ENCODE measurements at regions of chr9 and their contacts with region 1.

Region 1: DNA sequence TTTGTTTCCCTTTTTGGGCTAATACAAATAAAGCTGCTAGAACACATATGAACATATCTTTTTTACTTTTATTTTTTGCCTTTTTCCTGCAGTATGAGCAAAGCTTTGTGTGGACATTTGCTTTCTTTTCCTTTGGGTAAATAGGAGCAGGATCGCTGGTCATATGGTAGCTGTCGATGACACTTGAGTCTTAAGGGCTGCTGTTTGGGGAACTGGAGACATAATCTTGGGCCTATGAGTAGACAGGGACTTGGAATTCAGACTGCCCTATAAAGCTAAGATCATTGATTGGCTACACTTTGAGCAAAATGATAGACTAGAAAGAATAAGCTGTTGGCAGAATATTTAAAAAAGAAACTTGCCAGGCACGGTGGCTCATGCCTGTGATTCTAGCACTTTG is 60.9 kb upstream of the ABL1 start:
- DNase-seq: no peak
- ATAC-seq: no peak
- H3K4me3 ChIP-seq: no peak overlapping the region
- H3K4me3 Mint-ChIP-seq: peak overlapping the region in 1 of 3 donors; percentile 3
- H3K27ac ChIP-seq: no peak overlapping the region
- H3K27ac Mint-ChIP-seq: no peak overlapping the region
- H3K4me1 ChIP-seq: peaks cover 0 to 2% of the 10 kb centered on the region in 2 experiments
- H3K4me1 Mint-ChIP-seq: peaks cover 25 to 43% (median 27%) of the 10 kb centered on the region in 3 donors
- H3K27me3 ChIP-seq: no peaks in the 10 kb centered on the region
- H3K27me3 Mint-ChIP-seq: no peaks in the 10 kb centered on the region

Region 2: DNA sequence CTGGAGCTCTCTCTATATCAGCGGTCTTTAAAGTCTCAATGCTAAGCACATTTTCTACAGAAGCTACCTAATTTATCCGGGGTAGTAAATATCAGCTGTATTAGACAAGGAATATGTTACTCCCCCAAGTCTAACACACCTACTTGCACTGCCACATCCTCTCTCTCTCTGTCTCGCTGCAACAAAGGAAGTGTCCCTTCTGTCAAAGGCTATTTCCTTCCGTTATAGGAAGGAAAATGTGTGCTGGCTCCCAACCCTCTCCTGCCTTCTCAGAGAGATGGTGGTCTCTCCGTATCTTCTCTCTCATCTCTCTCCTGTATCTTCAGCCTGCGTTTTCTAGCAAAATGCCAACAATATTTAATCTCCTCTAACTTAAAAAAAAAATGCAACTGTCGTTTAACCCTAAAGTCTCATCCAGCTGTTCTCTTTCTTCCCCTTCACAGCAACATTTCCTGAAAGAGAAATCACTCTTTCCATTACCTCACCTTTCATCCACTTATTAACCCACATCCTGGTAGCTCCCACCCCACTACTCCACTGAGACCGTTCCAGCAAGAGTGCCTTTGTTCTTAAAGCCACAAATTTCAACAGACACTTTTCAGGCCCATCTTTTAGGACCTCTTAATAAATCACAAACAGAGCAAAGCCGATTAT is 1630.2 kb after region 1 on chr9:
- CTCF ChIA-PET with region 1: no interaction called
- POLR2A ChIA-PET with region 1: interaction called in 1 of 2 experiments, 11 read pairs
- DNase-seq: peak in 1 of 35 experiments; percentile 42
- ATAC-seq: peak in 2 of 4 experiments; percentile 32 to 58
- H3K4me3 ChIP-seq: no peak overlapping the region
- H3K4me3 Mint-ChIP-seq: peak overlapping the region; percentile 60 to 92 (median 72)
- H3K27ac ChIP-seq: peak overlapping the region; percentile 40
- H3K27ac Mint-ChIP-seq: peak overlapping the region; percentile 76 to 80
- H3K4me1 ChIP-seq: peaks cover 18 to 33% of the 10 kb centered on the region in 2 experiments
- H3K4me1 Mint-ChIP-seq: peaks cover 52 to 56% (median 55%) of the 10 kb centered on the region in 3 donors
- H3K27me3 ChIP-seq: peaks cover 0 to 1% of the 10 kb centered on the region in 2 experiments
- H3K27me3 Mint-ChIP-seq: no peaks in the 10 kb centered on the region

Measured in T-cell (primary cell).